WTC11 (cell line): ENCODE measurements at regions of chr11 and their contacts with region 1.

Region 1: DNA sequence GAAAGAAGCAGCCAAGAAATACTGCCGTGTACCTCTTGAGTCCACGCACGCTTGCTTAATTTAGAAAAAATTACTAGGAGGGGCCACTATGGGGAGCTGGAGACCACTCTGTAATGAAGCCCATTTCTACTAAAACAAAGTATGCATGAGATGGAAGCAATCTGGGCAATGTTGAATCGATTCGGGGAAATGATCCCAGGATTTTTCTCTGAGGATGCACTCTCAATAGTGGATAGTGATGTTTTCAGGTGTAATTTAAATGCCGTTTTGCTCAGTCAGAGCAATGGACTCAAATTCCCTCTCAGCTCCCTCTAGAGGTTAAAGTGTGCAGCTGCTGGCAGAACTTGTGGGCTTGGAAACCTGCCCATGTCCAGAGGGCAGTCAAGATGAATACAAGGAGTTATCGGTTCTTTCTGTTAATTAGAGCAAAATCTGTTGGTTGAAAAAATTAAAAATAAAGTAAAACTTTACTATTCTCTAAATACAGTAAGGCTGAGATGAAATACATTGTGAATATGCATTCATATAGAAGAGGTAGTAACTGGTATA is 64.1 kb downstream of the ME3 start:
- DNase-seq: peak; percentile 56
- ATAC-seq: peak; percentile 84
- H3K4me3 Mint-ChIP-seq: 0 out of 2 replicates have a peak overlapping the region, but pooled peaks have one; percentile 12
- H3K27ac Mint-ChIP-seq: no peak overlapping the region
- H3K4me1 Mint-ChIP-seq: peaks cover 26% of the 10 kb centered on the region
- H3K27me3 Mint-ChIP-seq: no peaks in the 10 kb centered on the region
- CTCF ChIP-seq: peak; percentile 66; the same call in 1 of the 2 replicates

Region 2: DNA sequence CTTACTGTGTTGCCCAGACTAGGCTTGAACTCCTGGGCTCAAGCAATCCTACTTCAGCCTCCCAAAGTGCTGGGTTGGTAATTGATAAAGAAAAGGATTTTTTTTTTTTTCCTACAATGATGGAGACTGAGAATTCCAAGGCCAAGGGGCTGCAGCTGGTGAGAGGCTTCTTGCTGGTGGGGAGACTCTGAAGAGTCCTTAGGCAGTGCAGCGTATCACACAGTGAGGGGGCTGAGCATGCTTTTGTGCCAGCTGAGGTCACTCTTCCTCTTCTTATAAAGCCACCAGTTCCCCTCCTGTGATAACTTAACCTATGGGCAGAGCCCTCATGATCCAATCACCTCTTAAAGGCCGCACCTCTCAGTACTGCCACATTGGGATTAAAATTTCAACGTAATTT is 261.8 kb before region 1 on chr11:
- CTCF ChIA-PET with region 1: no interaction called
- POLR2A ChIA-PET with region 1: no interaction called
- DNase-seq: no peak
- ATAC-seq: peak; percentile 79
- H3K4me3 Mint-ChIP-seq: no peak overlapping the region
- H3K27ac Mint-ChIP-seq: no peak overlapping the region
- H3K4me1 Mint-ChIP-seq: no peaks in the 10 kb centered on the region
- H3K27me3 Mint-ChIP-seq: no peaks in the 10 kb centered on the region
- CTCF ChIP-seq: no peak

Region 3: DNA sequence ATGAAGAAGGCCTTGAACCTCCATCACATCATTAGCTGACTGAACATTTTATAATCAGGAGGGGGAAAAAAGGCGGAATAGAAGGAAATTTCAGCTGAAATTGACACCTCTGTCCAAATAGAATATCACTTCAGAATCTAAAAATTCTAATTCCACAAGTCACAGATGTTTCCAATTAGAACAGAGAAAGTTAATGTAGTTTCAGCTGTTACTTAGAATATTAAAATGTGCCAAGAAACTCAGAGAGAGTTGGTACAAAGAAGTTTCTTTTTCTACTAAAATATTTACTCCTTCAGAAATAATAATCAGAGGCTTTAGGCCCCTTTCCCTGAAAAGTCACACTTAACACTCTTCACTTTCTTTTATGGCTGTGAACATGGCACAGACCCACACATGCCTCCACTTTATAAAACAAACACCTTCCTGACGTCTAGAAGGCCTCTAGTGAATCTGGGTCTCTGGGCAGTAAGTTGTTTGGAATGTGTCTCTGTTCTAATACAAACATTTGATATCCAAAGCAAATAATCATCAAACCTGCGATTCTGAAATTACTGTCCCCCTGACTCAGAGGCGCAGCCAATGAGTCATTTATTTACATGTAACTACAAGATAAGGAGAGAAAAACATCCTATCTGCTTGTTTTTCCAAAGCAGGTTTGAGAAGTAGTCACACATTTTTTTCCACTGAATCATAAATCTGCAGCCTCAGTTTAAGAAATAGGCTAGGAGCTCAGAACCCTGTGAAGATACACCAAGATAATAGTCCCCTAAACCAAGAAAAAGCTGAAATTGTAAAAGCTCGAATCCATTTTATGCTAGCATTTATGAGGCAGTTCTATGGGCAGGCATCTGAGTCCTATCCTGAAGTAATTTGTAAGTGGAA is 84.3 kb before region 1 on chr11:
- CTCF ChIA-PET with region 1: no interaction called
- POLR2A ChIA-PET with region 1: no interaction called
- DNase-seq: no peak
- ATAC-seq: no peak
- H3K4me3 Mint-ChIP-seq: no peak overlapping the region
- H3K27ac Mint-ChIP-seq: no peak overlapping the region
- H3K4me1 Mint-ChIP-seq: peaks cover 7% of the 10 kb centered on the region
- H3K27me3 Mint-ChIP-seq: peaks cover 11% of the 10 kb centered on the region
- CTCF ChIP-seq: no peak

Region 4: DNA sequence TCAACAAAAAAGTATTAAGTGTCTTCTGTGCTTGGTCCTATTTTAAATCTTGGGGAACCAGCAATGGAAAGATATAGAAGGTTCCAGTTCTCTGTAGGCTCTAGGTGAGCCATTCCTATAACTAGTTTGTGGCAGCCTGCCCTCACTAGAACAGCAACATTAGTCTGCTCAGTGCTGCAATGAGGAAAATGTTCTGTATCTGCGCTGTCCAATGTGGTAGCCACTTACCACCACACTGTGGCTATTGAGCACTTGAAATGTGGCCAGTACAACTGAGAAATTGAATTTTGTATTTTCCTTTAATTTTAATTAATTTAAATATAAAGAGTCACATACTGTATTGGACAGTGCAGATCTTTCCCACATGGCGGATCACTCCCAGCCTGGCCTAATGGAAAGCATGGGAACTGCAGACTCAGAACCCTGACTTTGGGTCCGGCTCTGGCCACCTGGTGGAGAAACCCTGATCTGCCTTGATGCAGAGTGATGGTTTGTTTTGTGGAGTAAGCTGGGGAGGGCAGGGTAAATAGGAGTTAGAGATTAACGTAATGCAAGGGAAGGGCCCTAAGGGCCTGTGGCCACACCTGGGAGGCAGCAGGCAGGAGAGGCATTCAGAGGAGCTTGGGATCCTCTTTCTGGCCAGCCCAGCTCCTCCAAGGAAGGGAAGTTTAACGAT is 36.9 kb before region 1 on chr11:
- CTCF ChIA-PET with region 1: interaction called, 14 read pairs
- POLR2A ChIA-PET with region 1: no interaction called
- DNase-seq: peak; percentile 87
- ATAC-seq: peak; percentile 99
- H3K4me3 Mint-ChIP-seq: no peak overlapping the region
- H3K27ac Mint-ChIP-seq: no peak overlapping the region
- H3K4me1 Mint-ChIP-seq: peaks cover 5% of the 10 kb centered on the region
- H3K27me3 Mint-ChIP-seq: no peaks in the 10 kb centered on the region
- CTCF ChIP-seq: peak; percentile 61; the same call in 1 of the 2 replicates

Region 5: GRCh38 chr11:86620891-86621521 is 12.7 kb after region 1 on chr11:
- CTCF ChIA-PET with region 1: interaction called, 20 read pairs
- POLR2A ChIA-PET with region 1: no interaction called
- DNase-seq: no peak
- ATAC-seq: no peak
- H3K4me3 Mint-ChIP-seq: no peak overlapping the region
- H3K27ac Mint-ChIP-seq: no peak overlapping the region
- H3K4me1 Mint-ChIP-seq: peaks cover 19% of the 10 kb centered on the region
- H3K27me3 Mint-ChIP-seq: no peaks in the 10 kb centered on the region
- CTCF ChIP-seq: no peak

Region 6: GRCh38 chr11:86749376-86749775 is 141.1 kb after region 1 on chr11:
- CTCF ChIA-PET with region 1: interaction called, 11 read pairs
- POLR2A ChIA-PET with region 1: no interaction called
- DNase-seq: peak; percentile 24
- ATAC-seq: peak; percentile 83
- H3K4me3 Mint-ChIP-seq: no peak overlapping the region
- H3K27ac Mint-ChIP-seq: no peak overlapping the region
- H3K4me1 Mint-ChIP-seq: no peaks in the 10 kb centered on the region
- H3K27me3 Mint-ChIP-seq: no peaks in the 10 kb centered on the region
- CTCF ChIP-seq: no peak